H1 (cell line): ENCODE measurements at regions of chr4 and their contacts with region 1.

Region 1: GRCh38 chr4:52911684-52912294 is 49.7 kb downstream of the RASL11B start:
- DNase-seq: peak; percentile 59 to 95
- H3K4me3 ChIP-seq: no peak overlapping the region
- H3K27ac ChIP-seq: no peak overlapping the region
- H3K4me1 ChIP-seq: peaks cover 0 to 3% (median 0%) of the 10 kb centered on the region in 4 experiments; a peak in 2 of 7 replicates
- H3K27me3 ChIP-seq: no peaks in the 10 kb centered on the region
- CTCF ChIP-seq: peak; percentile 74 to 93 (median 77)
- EP300 ChIP-seq: no peak
- POLR2A ChIP-seq: no peak
- RAD21 ChIP-seq: peak; percentile 71 to 80

Region 2: DNA sequence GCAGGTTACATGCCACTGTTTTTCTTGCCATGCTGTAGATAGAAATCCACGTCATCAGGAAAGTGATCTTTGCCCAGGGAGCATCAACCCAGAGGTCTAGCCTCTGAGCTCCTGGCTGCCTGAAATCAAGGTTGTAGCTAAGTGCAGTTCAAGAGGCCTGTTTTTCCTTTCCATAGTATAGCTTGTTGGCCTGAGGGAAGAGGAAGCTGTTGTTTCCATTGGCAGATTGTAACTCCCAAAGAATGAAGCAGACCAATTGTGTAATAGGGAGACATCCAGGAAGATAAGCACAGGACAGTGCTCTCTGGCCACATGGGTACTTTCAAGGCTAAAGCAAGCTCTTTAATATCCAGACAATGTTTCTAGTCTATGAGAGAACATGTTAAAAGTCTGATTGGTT is 686.5 kb before region 1 on chr4:
- CTCF ChIA-PET with region 1: no interaction called
- POLR2A ChIA-PET with region 1: no interaction called
- DNase-seq: no peak
- H3K4me3 ChIP-seq: no peak overlapping the region
- H3K27ac ChIP-seq: no peak overlapping the region
- H3K4me1 ChIP-seq: no peaks in the 10 kb centered on the region
- H3K27me3 ChIP-seq: no peaks in the 10 kb centered on the region
- CTCF ChIP-seq: no peak
- EP300 ChIP-seq: no peak
- POLR2A ChIP-seq: no peak
- RAD21 ChIP-seq: no peak

Region 3: DNA sequence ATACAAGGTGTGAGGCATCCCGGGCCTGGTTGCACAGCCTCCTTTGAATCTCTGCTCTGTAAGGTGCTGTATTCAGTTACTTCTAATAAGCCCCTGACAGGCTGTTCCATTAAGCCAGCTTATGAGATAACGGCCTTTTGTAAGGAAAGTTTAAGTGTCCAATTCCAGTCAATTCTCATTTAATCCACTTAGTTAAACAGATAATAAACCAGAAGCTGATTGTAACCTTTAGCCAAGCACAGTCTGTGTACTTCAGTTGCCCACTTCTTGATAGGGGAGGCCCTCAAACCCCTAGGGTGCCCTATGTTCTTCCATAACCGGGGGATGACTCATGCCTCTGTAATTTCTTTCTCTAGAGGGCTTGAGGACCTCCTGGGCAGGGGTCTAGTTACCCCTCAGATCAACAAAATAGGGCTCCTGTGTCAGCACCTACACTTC is 13.8 kb after region 1 on chr4:
- CTCF ChIA-PET with region 1: interaction called, 11 read pairs
- POLR2A ChIA-PET with region 1: interaction called, 5 read pairs
- DNase-seq: no peak
- H3K4me3 ChIP-seq: no peak overlapping the region
- H3K27ac ChIP-seq: no peak overlapping the region
- H3K4me1 ChIP-seq: peaks cover 5 to 11% (median 8%) of the 10 kb centered on the region in 4 experiments
- H3K27me3 ChIP-seq: no peaks in the 10 kb centered on the region
- CTCF ChIP-seq: no peak
- EP300 ChIP-seq: no peak
- POLR2A ChIP-seq: no peak
- RAD21 ChIP-seq: no peak

Region 4: GRCh38 chr4:53101191-53101581 is 189.4 kb after region 1 on chr4:
- CTCF ChIA-PET with region 1: no interaction called
- POLR2A ChIA-PET with region 1: no interaction called
- DNase-seq: no peak
- H3K4me3 ChIP-seq: no peak overlapping the region
- H3K27ac ChIP-seq: no peak overlapping the region
- H3K4me1 ChIP-seq: no peaks in the 10 kb centered on the region; a peak in 2 of 7 replicates
- H3K27me3 ChIP-seq: no peaks in the 10 kb centered on the region
- CTCF ChIP-seq: no peak
- EP300 ChIP-seq: no peak
- POLR2A ChIP-seq: no peak
- RAD21 ChIP-seq: no peak